Activated CD8-positive, alpha-beta memory T cell treated with anti-CD3 and anti-CD28 coated beads, Interleukin-2, amount 10 ng/mL, durations not matched to agents 7 days and 5 days (primary cell): ENCODE measurements at regions of chr3 and their contacts with region 1.

Region 1: DNA sequence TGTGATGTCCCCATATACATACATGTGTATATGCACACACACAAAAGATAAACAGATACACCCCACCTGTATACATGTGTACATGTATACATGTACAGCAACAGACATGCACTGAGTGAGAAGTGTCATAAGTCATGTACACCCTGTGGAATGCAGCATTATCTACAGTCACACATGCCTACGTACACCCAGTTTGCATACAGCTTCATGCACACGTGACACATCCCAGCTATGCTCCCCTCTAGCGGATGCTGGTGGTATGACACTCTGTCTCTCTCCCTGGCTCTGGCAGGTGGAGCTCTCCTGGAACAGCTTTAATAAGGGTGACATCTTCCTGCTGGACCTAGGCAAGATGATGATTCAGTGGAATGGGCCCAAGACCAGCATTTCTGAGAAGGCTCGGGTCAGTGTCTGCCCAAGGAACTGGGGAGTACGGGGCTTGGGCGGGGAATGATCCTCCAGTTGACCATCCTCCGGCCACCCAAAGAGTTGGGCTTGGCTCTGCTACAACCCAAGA is 6.3 kb downstream of the VILL start:
- DNase-seq: peak; percentile 91
- ATAC-seq: peak; percentile 47
- H3K4me3 Mint-ChIP-seq: no peak overlapping the region
- H3K27ac Mint-ChIP-seq: peak overlapping the region; percentile 93
- H3K4me1 Mint-ChIP-seq: peaks cover 55% of the 10 kb centered on the region
- H3K27me3 Mint-ChIP-seq: no peaks in the 10 kb centered on the region

Region 2: GRCh38 chr3:37952564-37952963 is 44.3 kb before region 1 on chr3:
- CTCF ChIA-PET with region 1: no interaction called
- DNase-seq: no peak
- ATAC-seq: no peak
- H3K4me3 Mint-ChIP-seq: no peak overlapping the region
- H3K27ac Mint-ChIP-seq: no peak overlapping the region
- H3K4me1 Mint-ChIP-seq: peaks cover 22% of the 10 kb centered on the region
- H3K27me3 Mint-ChIP-seq: no peaks in the 10 kb centered on the region

Region 3: DNA sequence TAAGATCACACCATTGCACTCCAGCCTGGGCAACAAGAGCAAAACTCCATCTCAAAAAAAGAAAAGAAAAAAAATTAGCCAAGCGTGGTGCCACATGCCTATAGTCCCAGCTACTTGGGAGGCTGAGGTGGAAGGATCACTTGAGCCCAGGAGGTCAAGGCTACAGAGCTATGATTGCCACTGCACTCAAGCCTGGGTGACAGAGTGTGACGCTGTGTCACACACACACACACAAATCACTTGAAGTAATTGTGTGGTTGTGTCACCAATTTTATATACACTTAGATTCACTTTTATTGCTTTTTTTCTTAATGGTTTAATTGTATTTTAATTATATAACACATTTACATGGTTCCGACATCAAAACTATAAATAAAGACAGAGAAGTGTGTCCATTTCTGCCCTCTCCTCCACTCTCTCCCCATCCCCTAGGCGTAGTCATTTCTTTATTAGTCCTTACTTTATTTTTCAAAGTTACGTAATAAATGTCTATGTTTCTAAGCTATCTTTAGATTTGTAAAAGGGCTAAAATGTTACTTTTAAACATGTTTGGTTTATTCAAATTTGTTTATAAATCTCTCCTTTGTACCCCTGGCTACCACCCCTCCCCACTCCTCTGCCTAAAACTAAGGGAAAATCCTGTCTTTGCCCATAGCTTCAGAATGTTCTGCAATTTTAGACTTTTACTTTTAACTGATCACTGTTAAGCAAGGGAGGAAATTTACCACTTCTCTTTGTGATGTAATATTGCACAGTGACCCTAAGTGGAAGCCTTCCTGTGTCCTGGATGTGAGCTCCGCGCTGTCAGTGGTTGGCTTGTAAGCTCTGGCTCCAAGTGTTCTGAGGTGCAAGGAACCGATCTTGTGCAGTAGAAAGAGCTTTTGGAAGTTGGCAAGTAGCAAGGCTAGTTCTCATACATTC is 17.0 kb before region 1 on chr3:
- CTCF ChIA-PET with region 1: interaction called, 14 read pairs
- DNase-seq: no peak
- ATAC-seq: no peak
- H3K4me3 Mint-ChIP-seq: no peak overlapping the region
- H3K27ac Mint-ChIP-seq: no peak overlapping the region
- H3K4me1 Mint-ChIP-seq: peaks cover 3% of the 10 kb centered on the region
- H3K27me3 Mint-ChIP-seq: peaks cover 7% of the 10 kb centered on the region